Heart left ventricle (tissue), 16 donors: ENCODE measurements at regions of chr3 and their contacts with region 1.

Region 1: GRCh38 chr3:47164007-47164881 is at the start of gene SETD2:
- DNase-seq: peak; percentile 96 to 98 (median 97)
- ATAC-seq: peak; percentile 96 to 98 (median 98)
- H3K4me3 ChIP-seq: peak within 1 kb of the TSS; percentile 66 to 97 (median 95)
- H3K27ac ChIP-seq: peak within 1 kb of the TSS; percentile 88 to 98 (median 95)
- H3K4me1 ChIP-seq: peaks cover 16 to 56% (median 45%) of the 10 kb centered on the region in 12 donors
- H3K27me3 ChIP-seq: no peaks in the 10 kb centered on the region
- CTCF ChIP-seq: peak; percentile 1 to 59 (median 32)
- POLR2A ChIP-seq: peak in 1 of 2 donors; percentile 39
- total RNA-seq, gene SETD2: 24.6 to 34.1 (median 31.7) TPM

Region 2: DNA sequence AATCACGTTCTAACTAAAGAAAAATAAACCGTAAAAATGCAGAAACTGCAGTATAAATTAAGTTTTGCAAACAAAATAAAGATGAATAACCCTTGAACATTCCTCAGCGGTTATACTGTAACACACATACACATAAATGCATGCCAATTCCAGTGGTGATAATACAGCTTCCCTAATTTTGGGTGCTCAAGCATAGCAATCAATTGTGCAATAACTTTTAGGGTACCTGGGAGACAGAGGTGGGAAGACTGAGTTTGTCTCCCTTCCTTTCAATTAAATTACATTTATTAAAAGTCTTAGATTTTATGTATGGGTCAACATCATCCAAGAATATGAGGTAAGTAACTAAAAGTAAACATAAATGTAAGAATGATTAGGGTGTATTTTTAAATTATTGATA is 72.2 kb before region 1 on chr3:
- intact Hi-C with region 1: no loop called
- DNase-seq: no peak
- ATAC-seq: no peak
- H3K4me3 ChIP-seq: no peak overlapping the region
- H3K27ac ChIP-seq: no peak overlapping the region
- H3K4me1 ChIP-seq: no peaks in the 10 kb centered on the region
- H3K27me3 ChIP-seq: no peaks in the 10 kb centered on the region
- CTCF ChIP-seq: no peak
- POLR2A ChIP-seq: no peak

Region 3: GRCh38 chr3:47113669-47114365 is 50.4 kb before region 1 on chr3:
- intact Hi-C with region 1: loop called in 2 of 10 experiments (anchors 10 kb)
- DNase-seq: no peak
- ATAC-seq: no peak
- H3K4me3 ChIP-seq: no peak overlapping the region
- H3K27ac ChIP-seq: no peak overlapping the region
- H3K4me1 ChIP-seq: peaks cover 0 to 17% (median 0%) of the 10 kb centered on the region in 12 donors
- H3K27me3 ChIP-seq: no peaks in the 10 kb centered on the region
- CTCF ChIP-seq: no peak
- POLR2A ChIP-seq: no peak

Region 4: GRCh38 chr3:47266709-47267489 is 102.7 kb after region 1 on chr3:
- intact Hi-C with region 1: loop called in 1 of 10 experiments (anchors 10 kb)
- DNase-seq: peak; percentile 90 to 96 (median 94)
- ATAC-seq: peak; percentile 94 to 97 (median 96)
- H3K4me3 ChIP-seq: no peak overlapping the region
- H3K27ac ChIP-seq: peak overlapping the region; percentile 37 to 84 (median 65)
- H3K4me1 ChIP-seq: peaks cover 0 to 29% (median 11%) of the 10 kb centered on the region in 12 donors
- H3K27me3 ChIP-seq: no peaks in the 10 kb centered on the region
- CTCF ChIP-seq: no peak
- POLR2A ChIP-seq: no peak

Region 5: DNA sequence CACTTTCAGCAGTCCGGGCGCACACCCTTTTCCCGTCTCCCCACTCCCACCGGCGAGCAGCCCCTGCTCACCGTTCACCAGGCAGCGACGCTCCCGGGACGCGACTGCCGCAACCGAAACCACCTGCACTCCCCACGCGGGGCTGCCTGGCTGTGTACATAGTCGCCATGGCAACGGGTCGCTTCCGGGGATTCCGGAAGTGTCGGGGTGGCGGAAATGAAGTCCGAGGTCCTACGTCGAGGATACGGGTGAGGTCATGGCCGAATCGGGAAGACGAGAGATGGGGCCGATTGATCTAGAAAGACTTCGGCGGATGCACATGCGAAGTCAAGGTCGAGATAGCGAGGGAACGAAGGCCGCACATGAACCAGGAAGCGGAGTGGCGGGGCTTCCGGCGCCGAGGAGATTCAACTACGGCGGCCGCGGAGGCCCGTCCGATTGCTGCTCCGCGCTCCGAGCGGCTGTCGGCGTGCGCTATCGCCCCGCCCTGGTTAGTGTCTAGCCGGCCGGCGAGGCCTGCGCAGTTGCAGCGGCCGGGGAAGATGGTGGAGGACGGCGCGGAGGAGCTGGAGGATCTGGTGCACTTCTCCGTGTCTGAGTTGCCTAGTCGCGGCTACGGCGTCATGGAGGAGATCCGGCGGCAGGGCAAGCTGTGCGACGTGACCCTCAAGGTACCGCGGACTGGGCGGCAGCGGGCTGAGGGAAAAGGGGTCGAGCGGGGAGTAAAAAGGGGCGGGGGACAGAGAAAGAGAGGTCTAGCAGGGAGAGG is 118.4 kb after region 1 on chr3 and contains the starts of genes KIF9 and KLHL18:
- intact Hi-C with region 1: loop called in 3 of 10 experiments (anchors 2 to 10 kb)
- DNase-seq: peak; percentile 94 to 97 (median 95)
- ATAC-seq: peak; percentile 91 to 98 (median 97)
- H3K4me3 ChIP-seq: peak within 1 kb of the TSS; percentile 66 to 90 (median 84)
- H3K27ac ChIP-seq: peak within 1 kb of the TSS; percentile 66 to 98 (median 94)
- H3K4me1 ChIP-seq: peaks cover 7 to 48% (median 30%) of the 10 kb centered on the region in 12 donors
- H3K27me3 ChIP-seq: no peaks in the 10 kb centered on the region
- CTCF ChIP-seq: peak in 1 of 12 donors; percentile 31
- POLR2A ChIP-seq: peak in 1 of 2 donors; percentile 42
- total RNA-seq, gene KIF9: 5.2 to 13.0 (median 8.6) TPM
- total RNA-seq, gene KLHL18: 15.2 to 51.0 (median 43.5) TPM

Region 6: DNA sequence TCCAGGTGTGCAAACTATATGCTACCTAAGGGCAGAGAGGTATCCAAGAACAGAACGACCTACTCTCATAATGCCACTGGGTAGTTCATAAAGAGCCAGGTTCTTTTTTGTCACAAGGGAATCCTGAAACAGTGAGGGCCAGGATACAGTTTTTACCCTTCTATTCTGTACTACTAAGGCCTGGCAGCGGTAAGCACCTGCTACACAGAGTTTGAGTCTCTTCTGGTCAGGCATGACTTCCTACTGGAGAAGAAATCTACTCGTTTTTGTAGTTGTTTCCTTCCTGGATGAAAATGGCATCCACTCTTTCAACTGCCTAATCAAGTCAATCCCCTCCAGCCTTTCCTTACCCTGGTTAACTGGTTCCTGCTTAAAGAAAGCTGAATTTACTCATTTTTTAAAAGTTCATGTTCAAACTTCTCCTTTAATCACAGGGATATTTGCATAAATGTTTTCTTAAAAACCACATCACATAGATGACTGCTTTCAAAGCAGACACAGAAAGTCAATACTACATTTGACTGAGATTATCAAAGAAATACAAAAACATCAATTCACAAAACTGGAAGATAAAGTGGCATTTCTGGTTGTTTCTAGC is 812.0 kb after region 1 on chr3:
- intact Hi-C with region 1: no loop called
- DNase-seq: no peak
- ATAC-seq: no peak
- H3K4me3 ChIP-seq: no peak overlapping the region
- H3K27ac ChIP-seq: no peak overlapping the region
- H3K4me1 ChIP-seq: peaks cover 0 to 15% (median 4%) of the 10 kb centered on the region in 12 donors
- H3K27me3 ChIP-seq: no peaks in the 10 kb centered on the region
- CTCF ChIP-seq: no peak
- POLR2A ChIP-seq: no peak